BJ (cell line): ENCODE measurements at regions of chr7 and their contacts with region 1.

Region 1: DNA sequence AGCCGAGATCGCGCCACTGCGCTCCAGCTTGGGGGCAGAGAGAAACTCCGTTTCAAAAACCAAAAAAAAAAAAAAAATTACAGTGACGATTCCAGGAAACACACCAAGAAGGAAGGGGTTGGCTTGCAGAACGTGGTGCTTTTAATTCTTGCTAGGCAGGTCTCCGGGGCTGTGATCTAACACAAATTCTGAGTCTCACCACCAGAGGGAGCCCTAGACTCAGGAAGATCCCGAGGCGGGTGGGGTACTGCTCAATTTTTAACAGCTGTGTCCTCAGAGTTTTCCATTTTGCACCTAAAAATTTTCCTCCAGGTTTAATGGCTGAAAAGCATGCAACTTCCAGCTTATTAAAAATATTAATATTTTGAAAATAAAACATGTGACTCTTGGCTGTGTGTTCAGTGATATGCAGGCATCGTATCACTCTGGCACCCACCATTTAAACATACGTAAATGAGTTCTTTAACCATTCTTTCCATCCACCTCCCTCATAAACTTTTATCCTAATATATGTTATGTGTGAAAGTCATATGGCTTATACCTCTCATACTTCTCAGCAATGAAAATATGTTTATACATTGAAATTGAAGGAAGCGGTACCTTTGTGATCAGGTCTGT is 26.5 kb upstream of the NUB1 start:
- DNase-seq: no peak
- H3K4me3 ChIP-seq: no peak overlapping the region
- H3K27me3 ChIP-seq: peaks cover 5% of the 10 kb centered on the region; the same call in 1 of the 2 replicates
- CTCF ChIP-seq: peak; percentile 78

Region 2: GRCh38 chr7:151327659-151328058 is 12.5 kb after region 1 on chr7:
- CTCF ChIA-PET with region 1: interaction called, 50 read pairs
- POLR2A ChIA-PET with region 1: no interaction called
- DNase-seq: no peak
- H3K4me3 ChIP-seq: no peak overlapping the region
- H3K27me3 ChIP-seq: no peaks in the 10 kb centered on the region; the same call in 1 of the 2 replicates
- CTCF ChIP-seq: no peak

Region 3: DNA sequence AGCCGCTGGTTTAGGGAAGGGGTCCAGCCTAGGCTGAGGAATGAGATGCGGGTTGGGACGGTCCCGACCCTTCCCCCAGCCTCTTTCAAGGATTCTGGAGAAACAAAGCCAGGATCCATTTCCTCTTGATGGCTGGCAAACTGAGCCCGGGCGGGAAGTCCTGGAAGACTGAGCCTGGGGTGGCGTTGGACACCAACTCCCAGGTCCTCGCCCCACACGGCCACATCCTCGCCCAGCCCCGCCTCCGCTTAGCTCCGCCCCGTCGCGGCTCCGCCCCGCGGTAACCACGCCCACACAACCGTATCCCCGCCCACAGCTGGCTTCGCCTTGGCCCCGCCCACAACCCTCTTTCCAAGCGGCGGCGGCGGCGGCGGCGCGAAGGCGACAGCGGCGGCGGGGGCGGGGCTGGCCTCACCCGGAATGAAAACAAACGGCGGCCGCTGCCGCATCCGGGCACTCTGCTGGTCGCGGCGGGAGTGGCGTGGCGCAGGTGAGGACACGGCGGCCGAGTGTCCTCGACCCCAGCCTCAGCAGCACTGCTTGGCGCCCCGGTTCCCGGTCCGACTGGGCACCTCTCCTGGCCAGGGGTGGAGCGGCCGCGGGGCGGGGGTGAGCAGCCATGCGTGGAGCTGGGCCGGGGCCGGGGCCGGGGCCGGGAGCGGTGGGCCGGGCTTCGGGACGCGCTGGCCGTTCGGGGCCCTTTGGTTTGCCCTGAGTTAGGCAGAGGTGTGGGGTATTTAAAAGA is 26.4 kb after region 1 on chr7 and contains the start of gene NUB1:
- CTCF ChIA-PET with region 1: interaction called, 16 read pairs
- POLR2A ChIA-PET with region 1: no interaction called
- DNase-seq: peak; percentile 14
- H3K4me3 ChIP-seq: peak within 1 kb of the TSS; percentile 80
- H3K27me3 ChIP-seq: peaks cover 3% of the 10 kb centered on the region
- CTCF ChIP-seq: no peak
- polyA plus RNA-seq, gene NUB1: 44.5 and 46.3 TPM in 2 replicates

Region 4: GRCh38 chr7:151351027-151351426 is 35.9 kb after region 1 on chr7:
- CTCF ChIA-PET with region 1: interaction called, 54 read pairs
- POLR2A ChIA-PET with region 1: interaction called, 3 read pairs
- DNase-seq: no peak
- H3K4me3 ChIP-seq: no peak overlapping the region
- H3K27me3 ChIP-seq: no peaks in the 10 kb centered on the region
- CTCF ChIP-seq: 0 out of 2 replicates have a peak, but pooled peaks have one; percentile 17